ENCODE measurements at regions of chr15 and their contacts with region 1.

Region 1: GRCh38 chr15:85330901-85331588 is 49.4 kb upstream of the AKAP13 start:
- DNase-seq: peak; percentile 86 to 91
- ATAC-seq: peak; percentile 86 to 97 (median 94)
- H3K4me3 ChIP-seq: peak overlapping the region in 2 of 10 donors; percentile 3 to 54
- H3K27ac ChIP-seq: peak overlapping the region; percentile 75 to 95 (median 90)
- H3K4me1 ChIP-seq: peaks cover 16 to 64% (median 48%) of the 10 kb centered on the region in 9 donors
- H3K27me3 ChIP-seq: no peaks in the 10 kb centered on the region
- CTCF ChIP-seq: peak; percentile 56 to 91 (median 84)

Region 2: DNA sequence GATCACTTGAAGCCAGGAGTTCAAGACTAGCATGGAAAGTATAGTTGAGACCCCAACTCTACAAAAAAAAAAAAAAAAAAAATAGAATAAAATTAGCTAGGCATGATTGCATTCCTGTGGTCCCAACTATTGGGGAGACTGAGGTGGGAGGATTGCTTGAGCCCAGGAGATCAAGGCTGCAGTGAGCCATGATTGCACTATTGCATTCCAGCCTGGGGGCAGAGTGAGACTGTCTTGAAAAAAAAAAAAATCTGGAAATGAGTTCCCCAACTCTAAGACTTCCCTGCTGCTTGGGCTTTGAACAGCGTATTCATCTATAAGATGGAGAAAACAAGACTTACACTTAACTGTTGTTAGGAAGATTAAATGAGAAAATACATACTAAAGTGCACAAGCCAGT is 28.2 kb after region 1 on chr15:
- intact Hi-C with region 1: loop called in 1 of 10 experiments (anchors 2 kb)
- DNase-seq: no peak
- ATAC-seq: no peak
- H3K4me3 ChIP-seq: no peak overlapping the region
- H3K27ac ChIP-seq: peak overlapping the region in 7 of 10 donors; percentile 41 to 89 (median 83)
- H3K4me1 ChIP-seq: peaks cover 17 to 55% (median 29%) of the 10 kb centered on the region in 9 donors
- H3K27me3 ChIP-seq: no peaks in the 10 kb centered on the region
- CTCF ChIP-seq: no peak

Region 3: DNA sequence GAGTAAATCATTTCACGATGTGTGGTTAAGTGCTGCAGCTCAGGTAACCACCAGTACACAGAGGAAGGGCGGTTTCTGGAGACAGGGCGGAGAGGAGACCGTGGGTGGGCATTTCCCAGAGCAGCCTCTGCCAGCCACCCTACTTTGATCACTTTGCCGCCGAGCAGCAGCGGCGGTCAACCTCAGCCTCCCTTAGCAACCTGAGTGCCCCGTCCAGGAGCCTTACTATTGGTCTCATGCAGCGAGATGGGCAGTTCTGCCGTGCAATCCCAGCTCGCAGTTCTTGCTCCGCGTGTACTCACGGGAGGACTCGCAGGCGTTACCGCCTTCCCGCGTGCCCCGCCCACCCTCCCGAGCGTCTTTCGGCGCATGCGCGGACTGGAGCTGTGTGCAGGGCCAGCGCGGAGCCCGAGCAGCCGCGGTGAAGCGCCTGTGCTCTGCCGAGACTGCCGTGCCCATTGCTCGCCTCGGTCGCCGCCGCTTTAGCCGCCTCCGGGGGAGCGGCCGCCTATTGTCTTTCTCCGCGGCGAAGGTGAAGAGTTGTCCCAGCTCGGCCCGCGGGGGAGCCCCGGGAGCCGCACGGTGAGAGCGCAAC is 49.3 kb after region 1 on chr15 and contains the start of gene AKAP13:
- intact Hi-C with region 1: loop called in 5 of 10 experiments (anchors 2 to 5 kb)
- DNase-seq: peak; percentile 97 to 98
- ATAC-seq: peak; percentile 90 to 98 (median 95)
- H3K4me3 ChIP-seq: peak within 1 kb of the TSS; percentile 80 to 97 (median 92)
- H3K27ac ChIP-seq: peak within 1 kb of the TSS; percentile 91 to 96 (median 94)
- H3K4me1 ChIP-seq: peaks cover 0 to 48% (median 28%) of the 10 kb centered on the region in 9 donors
- H3K27me3 ChIP-seq: no peaks in the 10 kb centered on the region
- CTCF ChIP-seq: no peak
- total RNA-seq, gene AKAP13: 325 to 645 (median 537) TPM

Region 4: GRCh38 chr15:85412956-85413854 is 82.2 kb after region 1 on chr15:
- intact Hi-C with region 1: loop called in 4 of 10 experiments (anchors 2 to 10 kb)
- DNase-seq: peak; percentile 23 to 50
- ATAC-seq: peak; percentile 57 to 94 (median 80)
- H3K4me3 ChIP-seq: peak overlapping the region in 5 of 10 donors; percentile 9 to 31 (median 23)
- H3K27ac ChIP-seq: peak overlapping the region in 9 of 10 donors; percentile 7 to 78 (median 57)
- H3K4me1 ChIP-seq: peaks cover 3 to 86% (median 49%) of the 10 kb centered on the region in 9 donors
- H3K27me3 ChIP-seq: no peaks in the 10 kb centered on the region
- CTCF ChIP-seq: peak in 5 of 9 donors; percentile 13 to 30 (median 28)

Region 5: DNA sequence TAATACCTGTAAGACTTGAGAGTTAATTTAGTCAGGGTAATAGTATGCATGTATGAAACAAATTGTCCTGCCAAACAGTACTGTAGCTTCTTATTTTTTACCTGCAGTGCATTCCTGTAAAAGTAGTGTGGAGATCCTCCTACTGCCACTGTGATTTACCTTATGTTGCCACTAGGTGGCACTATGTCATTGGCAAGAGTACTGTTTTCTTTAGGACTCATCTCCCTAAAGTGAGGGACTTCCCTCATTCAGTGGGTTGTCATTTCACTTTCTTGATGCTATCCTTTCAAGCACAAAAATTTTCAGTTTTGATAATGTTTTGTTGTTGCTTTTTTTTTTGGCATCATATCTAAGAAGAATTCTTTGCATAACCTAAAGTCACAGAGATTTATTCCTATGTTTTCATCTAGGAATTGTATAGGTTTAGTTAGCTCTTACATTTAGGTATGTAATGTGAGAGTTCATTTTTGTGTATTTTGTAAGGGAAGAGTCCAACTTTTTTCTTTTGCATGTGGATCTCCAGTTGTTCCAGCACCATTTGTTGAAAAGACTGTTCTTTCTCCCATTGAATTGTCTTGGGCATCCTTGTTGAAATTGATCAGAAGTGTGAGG is 155.0 kb after region 1 on chr15:
- intact Hi-C with region 1: loop called in 1 of 10 experiments (anchors 5 kb)
- DNase-seq: peak in 1 of 2 donors; percentile 67
- ATAC-seq: peak; percentile 54 to 83 (median 76)
- H3K4me3 ChIP-seq: no peak overlapping the region
- H3K27ac ChIP-seq: peak overlapping the region in 1 of 10 donors; percentile 0
- H3K4me1 ChIP-seq: peaks cover 0 to 76% (median 51%) of the 10 kb centered on the region in 9 donors
- H3K27me3 ChIP-seq: no peaks in the 10 kb centered on the region
- CTCF ChIP-seq: peak; percentile 63 to 91 (median 82)

Region 6: GRCh38 chr15:85504749-85505676 is 174.0 kb after region 1 on chr15:
- intact Hi-C with region 1: loop called in 6 of 10 experiments (anchors 2 to 10 kb)
- DNase-seq: peak in 1 of 2 donors; percentile 72
- ATAC-seq: peak; percentile 35 to 68 (median 57)
- H3K4me3 ChIP-seq: no peak overlapping the region
- H3K27ac ChIP-seq: peak overlapping the region in 9 of 10 donors; percentile 9 to 90 (median 44)
- H3K4me1 ChIP-seq: peaks cover under 1 to 94% (median 39%) of the 10 kb centered on the region in 9 donors
- H3K27me3 ChIP-seq: no peaks in the 10 kb centered on the region
- CTCF ChIP-seq: peak; percentile 36 to 79 (median 63)

Measured in heart right ventricle (tissue), 16 donors.